Posterior vena cava (tissue), 2 donors: ENCODE measurements at regions of chr11 and their contacts with region 1.

Region 1: DNA sequence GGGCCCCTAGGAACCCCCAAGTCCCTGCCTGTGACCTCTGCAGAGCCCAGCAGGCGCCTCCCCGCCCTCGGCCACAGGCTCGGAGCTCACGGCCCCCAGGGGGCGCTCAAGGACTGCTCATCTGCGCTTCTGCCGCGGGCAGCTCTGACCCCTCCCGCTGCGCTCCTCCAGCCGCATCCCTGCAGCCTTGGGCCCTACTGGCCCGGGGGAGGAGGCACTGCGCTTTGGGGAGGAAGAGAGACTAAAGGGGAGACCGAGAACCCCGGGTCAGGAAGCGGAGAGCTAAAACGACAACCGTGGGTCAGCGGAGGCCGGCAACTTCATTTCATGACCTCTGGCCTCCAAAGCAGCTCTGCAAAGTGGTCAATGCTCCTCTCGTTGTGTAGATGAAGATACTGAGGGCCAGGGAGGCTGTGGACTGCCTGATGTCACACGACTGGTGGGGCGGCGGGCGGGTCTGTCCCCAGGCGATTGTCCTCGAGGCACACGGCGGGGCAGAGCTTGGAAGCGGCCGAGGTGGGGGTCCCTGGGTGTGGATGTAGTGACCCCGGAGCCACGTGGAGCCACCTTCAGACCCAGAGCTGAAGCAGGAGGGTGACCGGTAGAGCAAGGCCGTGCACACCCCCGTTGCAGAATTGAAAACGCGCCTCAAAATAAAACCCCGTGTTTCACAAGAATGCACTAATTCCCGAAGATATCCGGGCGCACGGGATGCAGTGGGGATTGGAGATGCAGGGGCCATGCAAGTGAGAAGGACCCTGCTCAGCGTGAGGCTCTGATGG is 2.7 kb upstream of the KRTAP5-6 start:
- DNase-seq: peak; percentile 97

Region 2: GRCh38 chr11:737371-737770 is 956.9 kb before region 1 on chr11:
- intact Hi-C with region 1: no loop called
- DNase-seq: no peak

Region 3: GRCh38 chr11:1652771-1653540 is 41.3 kb before region 1 on chr11:
- intact Hi-C with region 1: loop called in 1 of 2 experiments (anchors 5 kb)
- DNase-seq: peak; percentile 94

Region 4: GRCh38 chr11:1832211-1832919 is 138.1 kb after region 1 on chr11:
- intact Hi-C with region 1: loop called (anchors 2 kb)
- DNase-seq: no peak